Mammary epithelial cell (primary cell): ENCODE measurements at regions of chr18 and their contacts with region 1.

Region 1: GRCh38 chr18:76530846-76531245 is 35.8 kb upstream of the ZNF516 start:
- DNase-seq: no peak
- H3K4me3 ChIP-seq: no peak overlapping the region
- H3K27ac ChIP-seq: no peak overlapping the region
- H3K4me1 ChIP-seq: peaks cover 11% of the 10 kb centered on the region
- H3K27me3 ChIP-seq: no peaks in the 10 kb centered on the region
- CTCF ChIP-seq: no peak

Region 2: DNA sequence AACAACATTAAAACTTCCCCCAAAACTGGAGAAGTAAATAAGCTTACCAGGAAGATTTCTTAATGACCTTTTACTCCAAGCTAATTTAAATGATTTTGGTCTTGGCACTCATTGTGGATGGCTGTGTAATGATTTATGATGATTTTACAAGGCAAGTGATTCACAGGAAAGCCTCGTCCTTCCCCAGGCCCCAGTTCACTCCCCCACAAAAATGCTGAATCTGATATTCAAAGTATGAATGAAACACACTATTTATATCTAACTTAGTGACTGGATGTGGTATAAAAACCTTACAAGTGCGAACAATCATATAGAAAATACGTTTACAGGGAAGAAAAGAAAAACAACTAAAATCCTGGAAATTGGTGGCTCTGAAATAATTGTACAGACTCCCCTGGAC is 85.6 kb before region 1 on chr18:
- CTCF ChIA-PET with region 1: no interaction called
- dilution Hi-C with region 1: loop called (anchors 5 kb)
- in situ Hi-C with region 1: no loop called
- intact Hi-C with region 1: no loop called
- DNase-seq: peak; percentile 71
- H3K4me3 ChIP-seq: no peak overlapping the region
- H3K27ac ChIP-seq: peak overlapping the region; percentile 1
- H3K4me1 ChIP-seq: peaks cover 29% of the 10 kb centered on the region
- H3K27me3 ChIP-seq: no peaks in the 10 kb centered on the region
- CTCF ChIP-seq: no peak